Endothelial cell of umbilical vein (primary cell): ENCODE measurements at regions of chr17 and their contacts with region 1.

Region 1: GRCh38 chr17:32877164-32877764 is 340 bp upstream of the MYO1D start:
- DNase-seq: peak; percentile 89
- H3K4me3 ChIP-seq: peak overlapping the region; percentile 58 to 81 (median 72)
- H3K27ac ChIP-seq: peak overlapping the region; percentile 77
- H3K4me1 ChIP-seq: peaks cover 22% of the 10 kb centered on the region
- H3K27me3 ChIP-seq: peaks cover 0 to 3% of the 10 kb centered on the region in 2 experiments
- CTCF ChIP-seq: peak; percentile 93 to 96
- POLR2A ChIP-seq: no peak

Region 2: DNA sequence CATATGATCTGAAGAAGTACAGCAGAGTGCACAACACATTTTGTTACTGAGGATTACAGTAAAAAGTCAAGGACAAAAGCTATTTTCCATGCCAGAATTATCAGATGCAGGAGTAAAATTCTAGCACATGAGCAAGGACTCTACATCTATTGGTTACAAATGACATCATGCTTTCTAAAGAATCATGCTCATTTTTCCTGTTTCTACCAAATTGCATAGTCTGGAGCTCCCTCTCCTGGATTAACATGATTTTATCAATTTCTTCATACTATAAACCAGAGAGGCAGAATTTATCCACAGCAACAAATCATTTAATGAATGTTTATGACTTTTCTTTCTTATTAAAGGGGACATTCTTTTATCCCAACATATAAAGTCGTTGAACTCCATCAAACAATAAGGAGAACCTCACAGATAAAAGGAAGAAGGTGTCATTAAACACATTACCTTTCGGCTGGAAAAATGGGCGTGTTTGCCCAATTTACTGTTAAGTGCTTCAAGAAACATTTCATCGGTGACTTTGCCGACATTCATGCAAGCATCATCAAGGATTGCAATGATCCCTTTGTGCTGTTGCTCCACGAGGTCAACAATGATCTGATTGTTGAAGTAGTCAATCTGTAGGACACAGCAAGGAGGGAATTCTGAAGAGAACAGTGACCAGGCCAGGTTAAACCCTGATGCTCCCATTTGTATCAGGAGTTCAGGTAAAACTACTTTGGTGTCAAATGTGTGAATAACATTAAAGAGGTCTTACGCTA is 122.0 kb before region 1 on chr17:
- CTCF ChIA-PET with region 1: interaction called, 11 read pairs
- POLR2A ChIA-PET with region 1: no interaction called
- dilution Hi-C with region 1: no loop called
- intact Hi-C with region 1: no loop called
- DNase-seq: peak; percentile 84
- H3K4me3 ChIP-seq: no peak overlapping the region
- H3K27ac ChIP-seq: no peak overlapping the region
- H3K4me1 ChIP-seq: no peaks in the 10 kb centered on the region
- H3K27me3 ChIP-seq: no peaks in the 10 kb centered on the region
- CTCF ChIP-seq: peak; percentile 26 to 37
- POLR2A ChIP-seq: no peak

Region 3: DNA sequence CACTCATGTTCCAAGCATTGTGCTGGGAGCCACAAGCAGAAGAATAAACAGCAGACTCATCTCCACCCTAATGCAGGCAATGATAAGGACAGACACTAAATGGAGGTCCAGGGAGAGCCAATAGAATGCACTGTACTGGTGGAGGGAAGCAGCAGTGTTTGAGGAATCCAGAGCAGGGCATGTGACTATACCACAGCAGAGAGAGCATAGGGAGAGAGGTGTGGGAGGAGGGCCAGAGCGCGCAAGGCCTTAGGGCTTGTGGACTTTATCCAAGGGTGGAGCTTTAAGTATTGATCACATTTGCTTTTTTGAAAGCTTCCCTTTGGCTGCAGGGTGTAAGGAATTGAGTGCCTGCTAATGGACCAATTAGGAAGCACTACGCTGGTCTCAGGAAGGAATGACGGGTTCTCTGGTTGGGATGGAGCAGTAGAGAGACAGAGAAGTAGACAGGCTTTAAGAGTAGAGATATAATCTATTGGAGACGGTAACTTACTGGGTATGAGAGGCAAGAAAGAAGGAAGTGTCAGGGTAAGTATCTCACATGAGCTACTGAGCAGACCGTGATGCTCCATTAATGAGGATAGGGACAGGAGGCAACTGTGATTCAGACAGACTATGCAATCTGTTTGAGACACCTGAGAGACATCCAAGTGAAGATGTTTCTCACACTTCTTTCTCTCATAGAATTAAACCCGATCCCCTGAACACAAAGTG is 82.6 kb before region 1 on chr17:
- CTCF ChIA-PET with region 1: interaction called, 117 read pairs
- POLR2A ChIA-PET with region 1: interaction called, 6 read pairs
- dilution Hi-C with region 1: no loop called
- intact Hi-C with region 1: loop called (anchors 1 kb)
- DNase-seq: peak; percentile 39
- H3K4me3 ChIP-seq: no peak overlapping the region
- H3K27ac ChIP-seq: peak overlapping the region; percentile 92
- H3K4me1 ChIP-seq: peaks cover 57% of the 10 kb centered on the region
- H3K27me3 ChIP-seq: no peaks in the 10 kb centered on the region
- CTCF ChIP-seq: no peak
- POLR2A ChIP-seq: no peak

Region 4: GRCh38 chr17:32854207-32854606 is 23.1 kb before region 1 on chr17:
- CTCF ChIA-PET with region 1: interaction called, 28 read pairs
- POLR2A ChIA-PET with region 1: no interaction called
- dilution Hi-C with region 1: no loop called
- intact Hi-C with region 1: no loop called
- DNase-seq: peak; percentile 74
- H3K4me3 ChIP-seq: peak overlapping the region in 1 of 3 experiments; percentile 30
- H3K27ac ChIP-seq: peak overlapping the region; percentile 38
- H3K4me1 ChIP-seq: peaks cover 26% of the 10 kb centered on the region
- H3K27me3 ChIP-seq: no peaks in the 10 kb centered on the region
- CTCF ChIP-seq: no peak
- POLR2A ChIP-seq: no peak

Region 5: GRCh38 chr17:32927724-32928585 is 50.7 kb after region 1 on chr17 and contains the start of gene TMEM98:
- CTCF ChIA-PET with region 1: interaction called, 17 read pairs
- POLR2A ChIA-PET with region 1: no interaction called
- dilution Hi-C with region 1: no loop called
- intact Hi-C with region 1: loop called (anchors 5 kb)
- DNase-seq: no peak
- H3K4me3 ChIP-seq: peak within 1 kb of the TSS; percentile 40 to 78 (median 73)
- H3K27ac ChIP-seq: peak within 1 kb of the TSS; percentile 36
- H3K4me1 ChIP-seq: peaks cover 31% of the 10 kb centered on the region
- H3K27me3 ChIP-seq: no peaks in the 10 kb centered on the region
- CTCF ChIP-seq: no peak
- POLR2A ChIP-seq: no peak
- total RNA-seq, gene TMEM98: 83.6 and 101 TPM in 2 replicates

Region 6: GRCh38 chr17:32960506-32961214 is 83.4 kb after region 1 on chr17:
- CTCF ChIA-PET with region 1: no interaction called
- POLR2A ChIA-PET with region 1: no interaction called
- dilution Hi-C with region 1: no loop called
- intact Hi-C with region 1: no loop called
- DNase-seq: no peak
- H3K4me3 ChIP-seq: no peak overlapping the region
- H3K27ac ChIP-seq: no peak overlapping the region
- H3K4me1 ChIP-seq: no peaks in the 10 kb centered on the region
- H3K27me3 ChIP-seq: peaks cover 3 to 10% of the 10 kb centered on the region in 2 experiments
- CTCF ChIP-seq: no peak
- POLR2A ChIP-seq: no peak